Panc1 (cell line): ENCODE measurements at regions of chr12 and their contacts with region 1.

Region 1: GRCh38 chr12:57935839-57936512 is 5.4 kb upstream of the ATP23 start:
- DNase-seq: peak; percentile 80
- ATAC-seq: peak; percentile 99
- H3K4me3 ChIP-seq: peak overlapping the region; percentile 61 to 88
- H3K27ac ChIP-seq: peak overlapping the region; percentile 94
- H3K4me1 ChIP-seq: peaks cover 18% of the 10 kb centered on the region
- H3K27me3 ChIP-seq: no peaks in the 10 kb centered on the region
- CTCF ChIP-seq: no peak

Region 2: DNA sequence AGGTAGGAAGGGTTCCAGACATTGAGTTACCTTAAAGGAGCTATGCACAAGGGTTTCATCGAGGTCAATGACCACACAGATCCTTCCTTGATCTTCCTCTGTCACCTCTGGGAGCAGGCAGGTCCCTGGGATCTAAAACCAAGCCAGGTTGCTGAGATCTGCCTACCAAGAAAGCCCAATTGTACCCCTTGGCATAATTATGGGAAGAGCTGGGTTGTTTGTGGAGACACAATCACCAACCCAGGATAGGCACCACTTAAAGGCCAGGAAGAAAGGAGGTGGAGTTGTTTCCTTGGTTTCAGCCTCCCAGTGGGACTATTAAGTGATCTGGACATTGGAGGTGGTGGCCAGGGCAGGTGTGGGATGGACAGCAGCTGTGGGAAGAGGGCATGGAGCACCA is 109.0 kb before region 1 on chr12:
- CTCF ChIA-PET with region 1: no interaction called
- POLR2A ChIA-PET with region 1: interaction called, 14 read pairs
- in situ Hi-C with region 1: no loop called
- intact Hi-C with region 1: no loop called
- DNase-seq: no peak
- ATAC-seq: no peak
- H3K4me3 ChIP-seq: no peak overlapping the region
- H3K27ac ChIP-seq: no peak overlapping the region
- H3K4me1 ChIP-seq: peaks cover 9% of the 10 kb centered on the region
- H3K27me3 ChIP-seq: no peaks in the 10 kb centered on the region
- CTCF ChIP-seq: no peak

Region 3: GRCh38 chr12:57993025-57993424 is 57.0 kb after region 1 on chr12:
- CTCF ChIA-PET with region 1: no interaction called
- POLR2A ChIA-PET with region 1: no interaction called
- in situ Hi-C with region 1: no loop called
- intact Hi-C with region 1: no loop called
- DNase-seq: no peak
- ATAC-seq: no peak
- H3K4me3 ChIP-seq: no peak overlapping the region
- H3K27ac ChIP-seq: no peak overlapping the region
- H3K4me1 ChIP-seq: no peaks in the 10 kb centered on the region
- H3K27me3 ChIP-seq: no peaks in the 10 kb centered on the region
- CTCF ChIP-seq: peak; percentile 49; the same call in 1 of the 2 replicates

Region 4: DNA sequence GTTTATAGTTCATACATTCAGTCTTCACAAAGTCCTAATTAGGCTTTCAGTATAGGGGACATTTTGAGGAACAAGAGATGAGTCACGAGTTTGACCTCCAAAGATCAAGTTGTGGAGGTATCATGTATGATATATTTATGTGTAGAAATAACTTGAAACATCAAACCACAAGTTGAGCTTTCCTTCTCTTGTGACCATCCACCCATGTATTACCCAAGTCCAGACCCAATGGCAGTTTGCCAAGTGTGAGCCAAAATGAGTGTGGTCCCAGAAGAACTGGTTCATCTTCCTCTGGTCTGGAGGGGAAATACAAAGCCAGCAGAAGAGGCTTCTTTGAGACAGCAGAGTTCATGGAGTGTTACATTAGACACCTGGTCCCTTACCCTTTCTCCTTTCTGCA is 110.3 kb after region 1 on chr12:
- CTCF ChIA-PET with region 1: no interaction called
- POLR2A ChIA-PET with region 1: no interaction called
- in situ Hi-C with region 1: no loop called
- intact Hi-C with region 1: no loop called
- DNase-seq: no peak
- ATAC-seq: no peak
- H3K4me3 ChIP-seq: no peak overlapping the region
- H3K27ac ChIP-seq: no peak overlapping the region
- H3K4me1 ChIP-seq: no peaks in the 10 kb centered on the region
- H3K27me3 ChIP-seq: no peaks in the 10 kb centered on the region
- CTCF ChIP-seq: no peak